IMR-90 (cell line): ENCODE measurements at regions of chr20 and their contacts with region 1.

Region 1: DNA sequence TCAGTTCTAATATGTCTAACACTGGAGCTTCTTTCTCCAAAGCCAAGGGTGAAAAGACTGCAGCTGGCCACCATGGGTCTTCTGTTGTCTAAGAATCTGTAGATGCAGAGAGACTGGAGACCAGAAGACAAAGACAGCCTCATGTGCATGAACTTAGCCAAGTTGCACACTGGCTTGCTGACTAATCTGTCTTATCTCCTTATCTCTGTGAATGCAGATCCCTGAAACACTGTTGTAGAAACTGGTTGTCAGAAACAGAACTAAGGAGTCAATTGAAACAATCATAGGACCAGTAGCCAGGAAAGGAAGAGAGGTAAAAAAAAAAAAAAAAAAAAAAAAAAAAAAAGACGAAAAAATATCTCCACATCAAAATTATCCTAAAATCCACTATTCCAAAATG is 109.7 kb downstream of the BFSP1 start:
- DNase-seq: no peak
- ATAC-seq: no peak
- H3K4me3 ChIP-seq: no peak overlapping the region
- H3K27ac ChIP-seq: no peak overlapping the region
- H3K4me1 ChIP-seq: no peaks in the 10 kb centered on the region
- H3K27me3 ChIP-seq: no peaks in the 10 kb centered on the region
- CTCF ChIP-seq: no peak
- POLR2A ChIP-seq: no peak
- RAD21 ChIP-seq: no peak

Region 2: GRCh38 chr20:17281478-17281877 is 140.0 kb before region 1 on chr20:
- CTCF ChIA-PET with region 1: no interaction called
- POLR2A ChIA-PET with region 1: no interaction called
- dilution Hi-C with region 1: no loop called
- in situ Hi-C with region 1: no loop called
- intact Hi-C with region 1: loop called (anchors 10 kb)
- DNase-seq: peak; percentile 19
- ATAC-seq: no peak
- H3K4me3 ChIP-seq: no peak overlapping the region
- H3K27ac ChIP-seq: no peak overlapping the region
- H3K4me1 ChIP-seq: no peaks in the 10 kb centered on the region
- H3K27me3 ChIP-seq: peaks cover 2% of the 10 kb centered on the region; the same call in 1 of the 2 replicates
- CTCF ChIP-seq: peak; percentile 46
- POLR2A ChIP-seq: no peak
- RAD21 ChIP-seq: peak; percentile 42